Left lung (tissue), 14 donors: ENCODE measurements at regions of chr17 and their contacts with region 1.

Region 1: DNA sequence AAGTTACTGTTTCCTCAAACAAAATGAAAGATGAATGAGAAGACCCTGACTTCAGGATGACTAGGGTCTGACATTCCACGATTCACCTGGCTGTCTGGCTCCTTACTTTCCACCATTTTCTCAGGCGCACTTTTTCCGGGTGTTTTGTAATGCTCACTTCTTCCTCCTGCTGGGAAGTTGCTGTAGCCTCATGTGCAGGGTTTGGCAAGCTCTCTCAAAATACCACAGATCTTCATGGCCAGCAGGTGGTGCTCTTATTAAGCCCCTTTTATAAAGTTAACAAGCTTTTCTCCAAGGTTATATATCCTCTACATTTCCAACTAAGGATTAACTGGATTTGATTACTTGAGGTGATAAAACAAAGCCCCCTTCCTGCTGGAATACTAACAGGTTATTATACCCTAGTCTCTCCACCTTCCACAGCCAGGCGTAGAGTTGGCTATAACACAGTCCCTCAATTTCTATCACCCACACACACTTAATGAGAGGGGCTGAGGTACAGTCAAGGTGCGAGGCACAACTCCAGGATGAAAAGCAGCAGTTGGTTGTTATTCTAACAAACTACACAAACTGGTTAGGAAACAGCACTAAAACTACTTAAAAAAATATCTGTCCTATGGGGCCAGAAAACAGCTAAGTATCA is 45.4 kb downstream of the STH start:
- DNase-seq: peak in 3 of 4 donors; percentile 63 to 89 (median 75)
- ATAC-seq: peak; percentile 90
- H3K4me3 ChIP-seq: no peak overlapping the region
- H3K27ac ChIP-seq: peak overlapping the region; percentile 38 to 61
- H3K4me1 ChIP-seq: peaks cover 11 to 31% of the 10 kb centered on the region in 2 donors
- H3K27me3 ChIP-seq: no peaks in the 10 kb centered on the region
- CTCF ChIP-seq: peak; percentile 68 to 77

Region 2: DNA sequence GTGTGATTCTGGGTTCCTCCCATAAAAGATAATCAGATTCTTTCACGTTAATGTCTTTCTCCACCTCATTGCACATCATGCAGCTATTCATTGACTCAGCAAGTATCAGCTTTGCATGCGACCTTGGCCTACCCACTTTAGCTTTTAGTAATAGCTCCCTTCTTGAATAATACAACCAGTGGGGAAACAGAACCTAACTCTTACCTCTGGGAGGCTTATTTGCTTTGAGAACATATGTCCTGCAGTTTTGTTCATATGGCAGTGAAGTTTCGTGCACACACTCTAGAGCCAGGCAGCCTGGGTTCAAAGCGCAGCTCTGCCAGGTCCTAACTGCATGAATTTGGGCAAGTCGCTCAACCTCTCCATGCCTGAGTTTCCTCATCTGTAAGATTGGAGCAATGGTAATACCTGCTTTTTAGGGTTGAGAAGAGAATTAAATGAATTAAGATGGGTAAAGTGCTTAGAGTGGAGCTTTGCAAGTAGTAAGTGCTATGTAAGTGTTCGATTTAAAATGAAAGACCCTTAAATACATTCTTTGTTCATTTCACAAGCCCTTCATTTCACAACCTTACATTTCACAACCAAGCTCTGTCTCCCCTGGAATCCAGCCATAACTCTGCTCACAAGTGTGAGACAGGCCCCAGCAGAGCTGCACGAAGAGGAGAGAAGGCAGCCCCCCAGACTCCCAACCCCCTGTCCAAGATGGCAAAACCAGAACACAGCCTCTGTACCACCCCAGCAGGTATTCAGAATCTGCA is 120.7 kb before region 1 on chr17:
- intact Hi-C with region 1: no loop called
- DNase-seq: peak in 2 of 4 donors; percentile 65 to 74
- ATAC-seq: peak; percentile 47
- H3K4me3 ChIP-seq: no peak overlapping the region
- H3K27ac ChIP-seq: no peak overlapping the region
- H3K4me1 ChIP-seq: peaks cover 0 to 5% of the 10 kb centered on the region in 2 donors
- H3K27me3 ChIP-seq: no peaks in the 10 kb centered on the region
- CTCF ChIP-seq: no peak

Region 3: DNA sequence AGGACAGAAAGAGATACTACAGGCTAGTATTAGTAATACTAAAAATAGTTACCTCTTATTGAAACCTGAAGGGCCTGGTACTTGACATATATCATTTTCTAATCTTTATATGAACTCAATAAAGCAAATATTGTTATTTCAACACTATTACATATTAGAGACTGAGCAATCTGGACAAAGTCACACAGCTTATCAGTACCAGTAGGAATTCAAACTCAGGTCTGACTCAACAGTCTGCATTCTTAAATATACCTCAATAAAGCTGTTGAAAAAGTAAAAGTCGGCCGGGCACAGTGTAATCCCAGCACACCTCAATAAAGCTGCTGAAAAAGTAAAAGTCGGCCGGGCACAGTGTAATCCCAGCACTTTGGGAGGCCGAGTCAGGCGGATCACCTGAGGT is 81.4 kb after region 1 on chr17:
- intact Hi-C with region 1: no loop called
- DNase-seq: no peak
- ATAC-seq: peak; percentile 60
- H3K4me3 ChIP-seq: no peak overlapping the region
- H3K27ac ChIP-seq: no peak overlapping the region
- H3K4me1 ChIP-seq: peaks cover 41 to 72% of the 10 kb centered on the region in 2 donors
- H3K27me3 ChIP-seq: no peaks in the 10 kb centered on the region
- CTCF ChIP-seq: no peak

Region 4: DNA sequence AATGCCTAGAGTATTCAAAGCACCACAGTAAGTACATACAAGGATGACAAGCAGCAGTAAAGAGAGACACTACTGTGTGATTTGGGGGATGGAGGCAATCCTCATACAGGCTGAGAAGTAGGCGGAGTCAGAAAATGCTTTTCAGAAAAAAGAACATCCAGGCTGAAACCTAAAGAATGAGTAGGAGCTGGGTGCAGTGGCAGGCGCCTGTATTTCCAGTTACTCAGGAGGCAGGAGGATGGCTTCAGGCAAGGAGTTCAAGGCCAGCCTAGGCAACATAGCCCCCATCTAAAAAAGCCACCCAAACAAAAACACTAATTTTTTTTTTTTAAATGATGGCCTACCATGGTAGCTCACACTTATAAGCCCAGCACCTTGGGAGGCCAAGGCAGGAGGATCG is 138.6 kb after region 1 on chr17:
- intact Hi-C with region 1: loop called in 1 of 2 experiments (anchors 10 kb)
- DNase-seq: no peak
- ATAC-seq: no peak
- H3K4me3 ChIP-seq: no peak overlapping the region
- H3K27ac ChIP-seq: no peak overlapping the region
- H3K4me1 ChIP-seq: peaks cover 37 to 100% of the 10 kb centered on the region in 2 donors
- H3K27me3 ChIP-seq: no peaks in the 10 kb centered on the region
- CTCF ChIP-seq: no peak

Region 5: GRCh38 chr17:46262271-46262670 is 217.9 kb after region 1 on chr17:
- intact Hi-C with region 1: no loop called
- DNase-seq: no peak
- ATAC-seq: no peak
- H3K4me3 ChIP-seq: no peak overlapping the region
- H3K27ac ChIP-seq: no peak overlapping the region
- H3K4me1 ChIP-seq: peaks cover 0 to 9% of the 10 kb centered on the region in 2 donors
- H3K27me3 ChIP-seq: no peaks in the 10 kb centered on the region
- CTCF ChIP-seq: no peak